ENCODE measurements at regions of chr17 and their contacts with region 1.

Region 1: DNA sequence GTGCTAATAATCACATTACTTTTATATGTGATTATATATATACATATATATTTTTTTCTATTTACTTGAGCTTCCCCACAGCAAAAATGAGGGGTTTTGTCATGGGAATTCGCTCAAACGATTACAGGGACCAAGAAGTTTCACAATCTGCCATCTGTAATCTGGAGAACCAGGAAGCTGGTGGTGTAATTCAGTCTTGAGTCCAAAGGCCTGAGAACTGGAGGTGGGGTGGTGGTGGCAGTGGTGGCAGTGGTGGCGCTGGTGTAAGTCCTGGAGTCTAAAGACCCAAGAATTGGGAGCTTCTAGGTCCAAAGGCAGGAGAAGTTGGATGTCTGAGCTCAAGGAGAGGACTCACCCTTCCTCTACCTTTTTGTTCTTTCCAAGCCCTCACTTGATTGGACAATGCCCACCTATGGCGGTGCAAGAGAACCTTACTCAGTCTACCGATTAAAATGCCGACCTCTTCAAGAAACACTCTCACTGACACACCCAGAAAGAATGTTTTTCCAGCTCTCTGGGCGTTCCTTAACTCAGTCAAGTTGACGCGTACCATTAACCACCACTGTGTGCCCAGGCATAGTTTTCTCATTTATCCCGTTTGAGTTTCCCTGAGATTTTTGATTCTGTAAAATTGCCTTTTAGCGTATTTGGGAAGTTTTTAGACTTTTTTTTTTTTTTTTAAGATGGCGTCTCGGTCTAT is 31.9 kb downstream of the POLR2A start:
- DNase-seq: peak; percentile 74
- H3K4me3 ChIP-seq: no peak overlapping the region
- H3K27ac ChIP-seq: peak overlapping the region; percentile 53
- H3K4me1 ChIP-seq: peaks cover 6% of the 10 kb centered on the region
- H3K27me3 ChIP-seq: no peaks in the 10 kb centered on the region
- CTCF ChIP-seq: no peak

Region 2: DNA sequence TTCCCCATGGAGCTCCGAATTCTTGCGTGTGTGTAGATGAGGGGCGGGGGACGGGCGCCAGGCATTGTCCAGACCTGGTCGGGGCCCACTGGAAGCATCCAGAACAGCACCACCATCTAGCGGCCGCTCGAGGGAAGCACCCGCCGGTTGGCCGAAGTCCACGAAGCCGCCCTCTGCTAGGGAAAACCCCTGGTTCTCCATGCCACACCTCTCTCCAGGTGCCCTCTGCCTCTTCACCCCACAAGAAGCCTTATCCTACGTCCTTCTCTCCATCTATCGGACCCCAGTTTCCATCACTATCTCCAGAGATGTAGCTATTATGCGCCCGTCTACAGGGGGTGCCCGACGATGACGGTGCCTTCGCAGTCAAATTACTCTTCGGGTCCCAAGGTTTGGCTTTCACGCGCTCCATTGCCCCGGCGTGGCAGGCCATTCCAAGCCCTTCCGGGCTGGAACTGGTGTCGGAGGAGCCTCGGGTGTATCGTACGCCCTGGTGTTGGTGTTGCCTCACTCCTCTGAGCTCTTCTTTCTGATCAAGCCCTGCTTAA is 45.0 kb after region 1 on chr17:
- intact Hi-C with region 1: loop called (anchors 2 kb)
- DNase-seq: peak; percentile 97
- H3K4me3 ChIP-seq: peak overlapping the region; percentile 95
- H3K27ac ChIP-seq: peak overlapping the region; percentile 95
- H3K4me1 ChIP-seq: peaks cover 25% of the 10 kb centered on the region
- H3K27me3 ChIP-seq: no peaks in the 10 kb centered on the region
- CTCF ChIP-seq: peak; percentile 79

Measured in colonic mucosa (tissue), 4 donors.